Mammary epithelial cell (primary cell): ENCODE measurements at regions of chr14 and their contacts with region 1.

Region 1: GRCh38 chr14:75307700-75308379 is 29.2 kb downstream of the FOS start:
- DNase-seq: peak; percentile 65
- H3K4me3 ChIP-seq: no peak overlapping the region
- H3K27ac ChIP-seq: no peak overlapping the region
- H3K4me1 ChIP-seq: no peaks in the 10 kb centered on the region
- H3K27me3 ChIP-seq: no peaks in the 10 kb centered on the region
- CTCF ChIP-seq: peak; percentile 87 to 93

Region 2: DNA sequence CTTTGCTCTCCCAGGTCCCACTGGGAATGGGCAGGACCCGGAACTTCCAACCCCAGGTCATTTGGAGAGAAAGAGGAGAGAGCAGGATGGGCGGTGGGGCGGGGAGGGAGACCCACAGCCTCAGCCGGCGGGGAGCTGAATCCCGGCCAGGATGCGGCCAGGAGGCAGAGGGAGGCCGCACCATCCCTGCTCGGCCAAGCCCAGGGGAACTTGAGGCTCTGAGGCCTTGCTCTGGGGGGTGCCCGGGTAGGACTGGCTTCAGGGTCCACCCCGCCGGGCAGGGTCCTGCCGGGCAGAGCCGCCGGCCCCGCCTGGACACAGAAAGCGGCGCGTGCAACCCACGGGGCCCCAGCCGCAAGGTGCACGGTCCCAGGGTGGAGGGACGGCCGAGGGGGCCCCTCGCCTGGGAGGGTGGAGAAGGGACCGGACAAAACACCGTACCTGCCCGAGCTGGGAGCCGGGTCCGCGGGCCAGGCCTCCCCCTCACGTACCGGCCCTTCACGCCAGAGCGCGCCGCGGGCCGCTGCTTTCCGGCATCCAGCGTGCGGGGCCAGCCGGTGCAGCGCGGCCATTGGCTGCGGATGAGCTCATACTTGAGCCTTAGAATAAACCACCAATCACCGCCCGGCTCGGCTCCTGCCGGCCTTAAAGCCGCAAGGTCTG is 385.0 kb before region 1 on chr14 and contains the start of gene RPS6KL1:
- CTCF ChIA-PET with region 1: no interaction called
- dilution Hi-C with region 1: no loop called
- in situ Hi-C with region 1: loop called (anchors 25 kb)
- intact Hi-C with region 1: no loop called
- DNase-seq: peak; percentile 65
- H3K4me3 ChIP-seq: peak within 1 kb of the TSS in 2 of 3 experiments; percentile 33 to 43
- H3K27ac ChIP-seq: no peak within 1 kb of the TSS
- H3K4me1 ChIP-seq: peaks cover 4% of the 10 kb centered on the region
- H3K27me3 ChIP-seq: no peaks in the 10 kb centered on the region
- CTCF ChIP-seq: no peak
- total RNA-seq, gene RPS6KL1: 0.17 to 1.6 TPM

Region 3: GRCh38 chr14:75132382-75133086 is 175.3 kb before region 1 on chr14:
- CTCF ChIA-PET with region 1: interaction called, 3 read pairs
- dilution Hi-C with region 1: loop called (anchors 5 kb)
- in situ Hi-C with region 1: no loop called
- intact Hi-C with region 1: loop called (anchors 1 kb)
- DNase-seq: peak; percentile 71
- H3K4me3 ChIP-seq: no peak overlapping the region
- H3K27ac ChIP-seq: peak overlapping the region; percentile 20
- H3K4me1 ChIP-seq: peaks cover 16% of the 10 kb centered on the region
- H3K27me3 ChIP-seq: no peaks in the 10 kb centered on the region
- CTCF ChIP-seq: peak; percentile 69 to 71

Region 4: DNA sequence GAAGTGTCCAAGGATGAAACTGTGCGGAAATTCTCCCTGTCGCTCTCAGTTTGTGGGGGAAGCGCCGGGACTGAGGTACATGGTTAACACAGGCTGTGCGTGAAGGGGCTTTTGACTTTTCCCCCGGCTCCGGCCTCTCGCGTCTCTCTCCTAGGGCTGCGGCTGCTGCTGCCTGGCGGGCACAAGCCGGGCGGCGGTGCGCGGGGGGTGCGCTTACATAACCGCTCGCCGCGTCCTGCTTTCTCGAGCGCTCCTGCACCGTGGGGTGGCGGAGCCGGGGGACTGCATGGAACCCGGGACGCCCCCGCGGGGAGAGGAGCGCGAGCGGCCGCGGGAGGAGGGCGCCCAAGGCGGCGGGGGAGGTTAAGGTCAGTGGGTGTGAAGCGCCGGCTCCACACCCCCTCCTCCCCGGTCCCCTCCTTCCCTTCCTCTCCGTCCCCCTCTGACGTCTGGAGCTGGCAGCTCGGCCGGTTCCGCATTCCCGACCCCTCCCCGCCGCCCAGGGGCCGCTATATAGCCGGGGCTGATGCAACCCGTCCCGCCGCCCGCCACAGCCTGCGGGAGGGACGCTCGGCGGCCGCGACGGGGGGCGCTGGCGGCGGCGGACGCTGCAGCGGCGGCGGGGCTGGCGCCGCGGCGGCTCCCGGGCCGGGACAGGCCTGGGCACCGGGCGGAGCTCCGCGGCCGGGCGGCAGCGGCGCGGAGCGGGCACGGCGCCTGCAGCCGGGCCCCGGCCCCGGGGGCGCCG is 119.8 kb after region 1 on chr14 and contains the start of gene JDP2:
- CTCF ChIA-PET with region 1: no interaction called
- dilution Hi-C with region 1: no loop called
- in situ Hi-C with region 1: no loop called
- intact Hi-C with region 1: loop called (anchors 5 kb)
- DNase-seq: peak; percentile 26
- H3K4me3 ChIP-seq: peak within 1 kb of the TSS; percentile 57 to 69 (median 66)
- H3K27ac ChIP-seq: no peak within 1 kb of the TSS
- H3K4me1 ChIP-seq: peaks cover 11% of the 10 kb centered on the region
- H3K27me3 ChIP-seq: no peaks in the 10 kb centered on the region
- CTCF ChIP-seq: no peak
- total RNA-seq, gene JDP2: 13.8 to 39.7 TPM

Region 5: DNA sequence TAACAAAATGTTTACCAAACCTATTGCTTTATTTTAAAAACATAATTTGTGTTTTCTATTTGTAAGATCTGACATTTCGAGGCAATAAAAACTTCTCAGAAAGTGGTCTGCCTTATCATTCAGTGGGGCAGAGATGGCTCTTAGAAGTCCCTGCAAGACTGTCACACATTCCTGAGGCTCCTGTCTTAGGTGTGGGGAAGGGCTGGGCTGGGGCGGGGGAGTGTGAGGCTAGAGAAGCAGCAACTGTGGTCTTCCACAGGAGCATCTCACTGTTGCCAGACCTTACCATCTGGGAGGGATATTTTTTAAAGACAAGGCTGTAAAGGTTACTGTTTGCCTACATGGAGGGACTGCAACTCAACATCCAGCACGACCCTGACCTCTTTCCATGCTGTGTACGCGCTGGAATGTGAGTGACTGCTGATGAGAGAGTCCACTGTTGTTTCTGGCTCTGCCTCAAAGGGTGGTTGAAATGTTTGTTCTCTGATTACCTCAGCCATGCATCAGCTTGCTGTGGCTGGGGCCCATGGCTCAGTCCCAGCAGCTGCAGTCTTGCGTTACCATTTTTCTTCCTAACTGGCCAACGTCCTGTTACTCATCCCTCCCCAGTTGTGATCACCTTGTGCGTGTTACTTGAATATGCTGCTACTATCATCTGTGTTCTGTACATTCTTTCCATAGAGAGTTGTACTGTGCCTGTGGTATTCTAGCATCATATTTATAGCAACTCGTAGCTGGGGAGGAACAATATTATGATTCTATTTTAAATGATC is 340.4 kb after region 1 on chr14:
- CTCF ChIA-PET with region 1: interaction called, 12 read pairs
- dilution Hi-C with region 1: no loop called
- in situ Hi-C with region 1: no loop called
- intact Hi-C with region 1: loop called (anchors 5 kb)
- DNase-seq: peak; percentile 86
- H3K4me3 ChIP-seq: no peak overlapping the region
- H3K27ac ChIP-seq: peak overlapping the region; percentile 73
- H3K4me1 ChIP-seq: peaks cover 38% of the 10 kb centered on the region
- H3K27me3 ChIP-seq: no peaks in the 10 kb centered on the region
- CTCF ChIP-seq: no peak